Spleen (tissue), 13 donors: ENCODE measurements at regions of chr4 and their contacts with region 1.

Region 1: GRCh38 chr4:20773144-20773997 is 73.1 kb downstream of the PACRGL start:
- DNase-seq: no peak
- H3K4me3 ChIP-seq: no peak overlapping the region
- H3K27ac ChIP-seq: no peak overlapping the region
- H3K4me1 ChIP-seq: peaks cover 0 to 6% (median 0%) of the 10 kb centered on the region in 6 donors
- H3K27me3 ChIP-seq: peaks cover 0 to 6% (median 0%) of the 10 kb centered on the region in 7 donors
- CTCF ChIP-seq: peak in 8 of 11 experiments; percentile 27 to 64 (median 47)
- POLR2A ChIP-seq: no peak

Region 2: GRCh38 chr4:20572976-20573375 is 200.4 kb before region 1 on chr4:
- intact Hi-C with region 1: no loop called
- DNase-seq: no peak
- H3K4me3 ChIP-seq: no peak overlapping the region
- H3K27ac ChIP-seq: no peak overlapping the region
- H3K4me1 ChIP-seq: no peaks in the 10 kb centered on the region
- H3K27me3 ChIP-seq: no peaks in the 10 kb centered on the region
- CTCF ChIP-seq: no peak
- POLR2A ChIP-seq: no peak

Region 3: GRCh38 chr4:20617678-20618396 is 155.5 kb before region 1 on chr4:
- intact Hi-C with region 1: no loop called
- DNase-seq: no peak
- H3K4me3 ChIP-seq: no peak overlapping the region
- H3K27ac ChIP-seq: peak overlapping the region in 7 of 8 donors; percentile 24 to 70 (median 53)
- H3K4me1 ChIP-seq: peaks cover 0 to 29% (median 11%) of the 10 kb centered on the region in 6 donors
- H3K27me3 ChIP-seq: no peaks in the 10 kb centered on the region
- CTCF ChIP-seq: no peak
- POLR2A ChIP-seq: no peak

Region 4: DNA sequence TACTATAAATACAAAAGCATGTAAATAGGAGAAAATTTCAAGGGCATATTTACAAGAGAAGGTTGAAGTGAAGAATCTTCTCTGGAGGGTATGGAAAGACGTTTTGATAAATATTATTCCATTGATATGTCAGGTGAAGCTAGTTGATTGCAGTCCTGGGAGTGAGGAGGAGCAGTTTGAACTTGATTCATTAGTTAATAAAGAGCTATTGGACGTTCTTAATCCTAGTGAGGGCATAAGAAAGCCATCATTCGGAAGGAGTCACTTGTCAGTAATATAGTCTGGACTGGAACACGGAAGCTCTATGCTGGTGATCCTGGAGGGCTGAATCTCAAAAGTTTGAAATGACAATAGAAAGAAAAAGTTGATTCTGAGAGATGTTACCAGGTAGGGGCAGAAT is 382.0 kb after region 1 on chr4:
- intact Hi-C with region 1: no loop called
- DNase-seq: no peak
- H3K4me3 ChIP-seq: no peak overlapping the region
- H3K27ac ChIP-seq: no peak overlapping the region
- H3K4me1 ChIP-seq: no peaks in the 10 kb centered on the region
- H3K27me3 ChIP-seq: no peaks in the 10 kb centered on the region
- CTCF ChIP-seq: no peak
- POLR2A ChIP-seq: no peak

Region 5: DNA sequence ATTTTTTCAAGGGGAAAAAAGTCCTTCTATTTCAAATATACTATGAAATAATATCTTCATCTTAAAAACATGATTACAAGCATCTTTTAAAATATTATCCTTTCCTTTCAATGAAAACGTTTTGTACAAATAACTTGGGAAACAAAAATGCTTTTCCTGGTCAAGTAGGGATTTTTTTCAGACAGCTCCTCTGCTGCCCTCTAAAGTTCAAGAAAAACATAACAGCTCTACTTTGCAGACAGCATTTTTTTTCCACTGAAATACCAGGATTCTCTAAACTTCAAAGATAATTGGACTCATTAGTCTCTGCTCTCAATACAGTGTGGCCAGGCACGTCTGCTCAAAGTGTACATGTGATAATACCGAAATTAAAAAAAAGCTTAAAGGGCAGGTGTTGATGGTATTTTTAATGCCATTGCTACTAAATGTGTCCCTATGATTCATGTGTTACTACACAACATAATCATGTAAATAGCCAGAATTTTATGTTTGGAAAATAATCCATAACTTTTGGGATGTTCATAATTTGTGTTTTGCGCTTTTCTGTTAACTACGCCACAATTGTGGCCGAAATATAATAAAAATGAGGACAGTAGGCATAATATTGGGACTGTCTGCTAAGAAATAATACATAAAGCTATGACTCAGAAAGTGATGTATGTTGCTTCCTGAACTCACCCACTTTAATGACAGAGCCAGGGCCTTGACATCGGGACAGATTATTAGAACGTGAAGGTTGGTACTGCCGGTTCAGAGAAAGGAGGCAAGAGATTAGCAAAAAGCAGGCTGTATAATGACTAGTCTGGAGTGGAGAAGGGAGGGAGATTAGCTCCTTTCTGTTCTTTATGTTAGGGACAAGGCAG is 696.3 kb after region 1 on chr4:
- intact Hi-C with region 1: loop called (anchors 10 kb)
- DNase-seq: no peak
- H3K4me3 ChIP-seq: no peak overlapping the region
- H3K27ac ChIP-seq: no peak overlapping the region
- H3K4me1 ChIP-seq: no peaks in the 10 kb centered on the region
- H3K27me3 ChIP-seq: no peaks in the 10 kb centered on the region
- CTCF ChIP-seq: peak in 3 of 11 experiments; percentile 24 to 27 (median 27)
- POLR2A ChIP-seq: no peak

Region 6: DNA sequence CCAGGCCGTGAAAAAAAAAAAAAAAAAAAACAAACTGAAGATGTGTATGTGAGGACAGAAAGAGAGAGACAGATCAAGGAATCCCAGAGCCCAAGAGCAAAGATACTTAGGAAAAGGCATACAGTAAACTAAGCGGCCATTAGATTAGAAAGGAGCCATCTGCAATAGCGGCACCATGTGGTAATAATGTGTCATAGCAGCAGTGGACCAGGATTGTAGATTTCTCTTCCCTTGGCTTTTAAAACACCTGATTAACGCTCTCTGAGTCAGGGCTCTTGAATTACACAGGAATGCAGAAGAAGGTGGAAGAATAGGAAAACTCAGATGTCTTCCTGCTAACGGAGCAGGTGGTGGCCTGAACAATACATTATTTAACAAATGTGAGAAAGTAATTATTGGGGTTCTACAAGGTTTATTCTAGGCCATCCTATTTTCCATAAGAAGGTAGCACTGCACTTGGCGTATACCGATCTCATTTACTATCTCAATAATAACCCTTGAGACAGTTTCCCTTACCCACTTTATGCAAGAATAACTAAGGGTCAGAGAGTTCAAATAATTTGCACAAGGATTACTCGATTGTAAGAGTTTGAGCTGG is 992.5 kb after region 1 on chr4:
- intact Hi-C with region 1: loop called (anchors 10 kb)
- DNase-seq: no peak
- H3K4me3 ChIP-seq: no peak overlapping the region
- H3K27ac ChIP-seq: no peak overlapping the region
- H3K4me1 ChIP-seq: peaks cover 0 to 3% (median 0%) of the 10 kb centered on the region in 6 donors
- H3K27me3 ChIP-seq: no peaks in the 10 kb centered on the region
- CTCF ChIP-seq: peak in 9 of 11 experiments; percentile 44 to 76 (median 69)
- POLR2A ChIP-seq: no peak